Activated naive CD4-positive, alpha-beta T cell treated with anti-CD3 and anti-CD28 coated beads for 36 hours (primary cell): ENCODE measurements at regions of chr16 and their contacts with region 1.

Region 1: DNA sequence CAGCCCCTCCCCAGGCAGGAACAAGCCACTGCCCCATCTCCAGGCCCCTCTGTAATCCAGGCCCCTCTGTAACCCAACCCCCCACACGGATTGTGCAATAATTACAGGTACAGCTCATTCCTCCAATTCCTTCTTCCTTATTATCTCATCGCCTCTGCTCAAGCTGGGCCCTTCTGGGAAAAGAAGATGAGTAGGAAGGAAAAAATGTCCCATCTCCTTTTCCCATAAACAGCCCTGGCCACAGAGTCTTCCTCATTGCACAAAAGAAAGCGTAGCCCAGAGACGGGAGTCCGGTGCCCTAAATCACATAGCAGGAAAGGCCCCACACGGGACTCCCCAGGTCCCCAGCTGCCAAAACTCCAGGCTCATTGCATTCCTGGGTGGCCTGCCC is 3.6 kb upstream of the LITAFD start:
- DNase-seq: no peak
- H3K4me3 Mint-ChIP-seq: no peak overlapping the region
- H3K27ac Mint-ChIP-seq: no peak overlapping the region
- H3K4me1 Mint-ChIP-seq: peaks cover 11% of the 10 kb centered on the region
- H3K27me3 Mint-ChIP-seq: no peaks in the 10 kb centered on the region

Region 2: DNA sequence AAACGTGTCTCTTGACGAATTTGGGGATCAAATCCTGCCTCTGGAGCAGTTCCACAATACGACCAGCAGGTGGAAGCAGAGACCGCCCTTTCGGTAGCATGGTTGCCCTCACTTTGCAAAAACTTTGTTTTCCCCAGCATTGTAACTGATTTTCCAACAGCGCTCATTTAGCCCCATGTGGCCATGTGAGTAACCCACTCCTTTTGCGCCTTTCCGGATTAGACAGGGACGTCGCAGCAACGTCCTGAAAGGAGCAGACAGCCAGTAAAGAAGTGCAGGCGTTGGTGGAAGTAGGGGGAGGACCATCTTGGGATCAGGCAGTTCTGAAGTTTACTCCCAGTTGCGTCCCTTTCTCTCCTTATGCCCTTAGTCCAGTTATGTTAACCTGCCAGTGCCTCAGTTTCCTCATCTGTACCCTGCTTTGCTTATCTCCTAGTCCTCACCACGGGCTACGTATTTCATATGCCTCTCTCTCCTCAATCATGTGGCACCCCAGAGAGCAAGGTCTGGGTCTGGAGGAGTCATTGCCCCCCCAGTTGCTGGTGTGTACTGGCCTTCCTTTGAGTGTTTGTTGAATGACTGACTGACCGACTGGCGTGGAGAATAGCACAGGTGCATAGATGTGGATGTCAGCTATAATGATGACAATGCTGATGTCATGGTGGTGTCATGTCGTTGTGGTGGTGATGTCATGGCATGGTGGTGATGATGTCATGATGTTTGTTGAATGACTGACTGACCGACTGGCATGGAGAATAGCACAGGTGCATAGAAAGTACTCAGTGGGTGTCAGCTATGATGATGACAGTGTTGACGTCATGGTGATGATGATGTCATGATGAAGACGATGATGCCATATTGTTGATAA is 310.5 kb before region 1 on chr16:
- CTCF ChIA-PET with region 1: interaction called, 34 read pairs
- intact Hi-C with region 1: loop called (anchors 1 kb)
- DNase-seq: peak; percentile 87
- H3K4me3 Mint-ChIP-seq: no peak overlapping the region
- H3K27ac Mint-ChIP-seq: no peak overlapping the region
- H3K4me1 Mint-ChIP-seq: peaks cover 1% of the 10 kb centered on the region
- H3K27me3 Mint-ChIP-seq: peaks cover 12% of the 10 kb centered on the region

Region 3: GRCh38 chr16:8621572-8622314 is 256.8 kb before region 1 on chr16 and contains the start of gene METTL22:
- CTCF ChIA-PET with region 1: no interaction called
- intact Hi-C with region 1: no loop called
- DNase-seq: peak; percentile 92
- H3K4me3 Mint-ChIP-seq: peak within 1 kb of the TSS; percentile 97
- H3K27ac Mint-ChIP-seq: peak within 1 kb of the TSS; percentile 70
- H3K4me1 Mint-ChIP-seq: peaks cover 27% of the 10 kb centered on the region
- H3K27me3 Mint-ChIP-seq: no peaks in the 10 kb centered on the region
- total RNA-seq, gene METTL22: 43.2 to 48.4 TPM

Region 4: GRCh38 chr16:8660841-8661301 is 217.6 kb before region 1 on chr16:
- CTCF ChIA-PET with region 1: interaction called, 8 read pairs
- intact Hi-C with region 1: loop called (anchors 1 kb)
- DNase-seq: peak; percentile 70
- H3K4me3 Mint-ChIP-seq: no peak overlapping the region
- H3K27ac Mint-ChIP-seq: no peak overlapping the region
- H3K4me1 Mint-ChIP-seq: no peaks in the 10 kb centered on the region
- H3K27me3 Mint-ChIP-seq: no peaks in the 10 kb centered on the region

Region 5: GRCh38 chr16:8855011-8855786 is 23.3 kb before region 1 on chr16:
- CTCF ChIA-PET with region 1: interaction called, 28 read pairs
- intact Hi-C with region 1: no loop called
- DNase-seq: peak; percentile 16
- H3K4me3 Mint-ChIP-seq: no peak overlapping the region
- H3K27ac Mint-ChIP-seq: no peak overlapping the region
- H3K4me1 Mint-ChIP-seq: peaks cover 18% of the 10 kb centered on the region
- H3K27me3 Mint-ChIP-seq: no peaks in the 10 kb centered on the region

Region 6: GRCh38 chr16:8943966-8944759 is 65.6 kb after region 1 on chr16:
- CTCF ChIA-PET with region 1: no interaction called
- intact Hi-C with region 1: no loop called
- DNase-seq: no peak
- H3K4me3 Mint-ChIP-seq: no peak overlapping the region
- H3K27ac Mint-ChIP-seq: peak overlapping the region; percentile 67
- H3K4me1 Mint-ChIP-seq: peaks cover 96% of the 10 kb centered on the region
- H3K27me3 Mint-ChIP-seq: no peaks in the 10 kb centered on the region

Region 7: GRCh38 chr16:9008601-9009260 is 130.2 kb after region 1 on chr16:
- CTCF ChIA-PET with region 1: interaction called, 12 read pairs
- intact Hi-C with region 1: no loop called
- DNase-seq: peak; percentile 78
- H3K4me3 Mint-ChIP-seq: no peak overlapping the region
- H3K27ac Mint-ChIP-seq: no peak overlapping the region
- H3K4me1 Mint-ChIP-seq: peaks cover 4% of the 10 kb centered on the region
- H3K27me3 Mint-ChIP-seq: peaks cover 9% of the 10 kb centered on the region

Region 8: DNA sequence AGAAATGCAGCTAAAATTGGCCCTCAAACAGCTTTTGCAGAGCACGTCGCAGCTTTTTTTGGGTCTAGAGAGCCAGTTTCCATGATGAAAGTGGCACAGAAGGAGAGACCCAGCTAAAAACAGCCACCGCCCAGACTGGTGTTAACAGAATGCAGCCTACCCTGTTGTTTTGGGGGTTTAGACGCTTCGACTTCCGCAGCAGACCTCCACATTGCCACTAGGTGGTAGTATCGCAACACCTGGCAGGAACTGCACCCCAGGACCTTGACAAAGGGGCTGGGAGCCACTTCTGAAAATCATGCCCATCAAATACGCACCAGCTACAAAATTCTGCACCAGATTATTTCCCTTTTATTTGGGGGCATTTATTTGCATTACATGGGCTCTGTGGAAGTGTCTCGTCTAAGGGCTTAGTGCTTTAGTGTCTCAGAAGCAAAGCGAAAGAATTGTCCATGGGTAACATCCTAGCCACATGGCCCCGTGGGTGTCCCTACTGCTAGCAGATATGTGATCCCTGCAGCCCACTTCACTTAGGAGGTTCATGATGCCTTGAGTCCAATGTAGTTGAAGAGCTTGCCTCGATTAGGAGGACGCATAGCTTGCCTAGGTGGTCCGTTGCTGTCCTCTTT is 380.0 kb after region 1 on chr16:
- CTCF ChIA-PET with region 1: no interaction called
- intact Hi-C with region 1: no loop called
- DNase-seq: peak; percentile 43
- H3K4me3 Mint-ChIP-seq: no peak overlapping the region
- H3K27ac Mint-ChIP-seq: no peak overlapping the region
- H3K4me1 Mint-ChIP-seq: no peaks in the 10 kb centered on the region
- H3K27me3 Mint-ChIP-seq: no peaks in the 10 kb centered on the region